Activated CD4-positive, alpha-beta T cell treated with anti-CD3 and anti-CD28 coated beads, Interleukin-2, amount 10 ng/mL, durations not matched to agents 24 days and 14 days (primary cell): ENCODE measurements at regions of chr22 and their contacts with region 1.

Region 1: GRCh38 chr22:41842996-41843970 is 10.4 kb downstream of the SREBF2 start:
- DNase-seq: no peak
- H3K4me3 Mint-ChIP-seq: peak overlapping the region; percentile 33
- H3K27ac Mint-ChIP-seq: peak overlapping the region; percentile 87
- H3K4me1 Mint-ChIP-seq: peaks cover 73% of the 10 kb centered on the region
- H3K27me3 Mint-ChIP-seq: no peaks in the 10 kb centered on the region

Region 2: DNA sequence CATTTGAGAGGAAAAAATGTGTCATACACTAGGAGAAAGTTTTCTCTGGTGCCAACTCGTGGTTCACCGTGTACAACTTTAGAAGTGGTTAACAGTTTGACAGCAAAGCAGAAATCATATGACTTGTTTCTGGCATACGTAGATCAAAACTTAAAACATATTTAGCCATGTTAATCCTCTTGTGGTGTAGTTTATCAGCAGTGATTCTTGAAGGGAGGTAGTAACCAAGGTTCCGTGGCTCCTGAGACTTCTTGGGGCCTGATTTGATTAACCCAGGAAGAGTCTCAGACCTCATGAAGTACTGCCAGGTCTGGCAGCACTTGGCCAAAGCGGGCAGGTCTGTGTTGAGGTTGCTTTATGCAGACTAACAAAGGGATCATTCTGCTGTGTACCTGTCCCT is 30.1 kb after region 1 on chr22:
- intact Hi-C with region 1: loop called (anchors 1 kb)
- DNase-seq: peak; percentile 71
- H3K4me3 Mint-ChIP-seq: peak overlapping the region; percentile 75
- H3K27ac Mint-ChIP-seq: peak overlapping the region; percentile 96
- H3K4me1 Mint-ChIP-seq: peaks cover 42% of the 10 kb centered on the region
- H3K27me3 Mint-ChIP-seq: no peaks in the 10 kb centered on the region